Activated T-helper 1 cell treated with anti-CD3 and anti-CD28 coated beads, Interleukin-12 subunit alpha, Interleukin-12 subunit beta, Interleukin-2, Interleukin-4 antibody, amounts not matched to agents 30 ng/mL and 10 ng/mL and 1 ng/mL, durations not matched to agents 14 hours and 24 hours and 36 hours (primary cell): ENCODE measurements at regions of chr21 and their contacts with region 1.

Region 1: GRCh38 chr21:36104317-36105300 is 30.3 kb upstream of the CBR3 start:
- DNase-seq: peak; percentile 28
- H3K4me3 Mint-ChIP-seq: peak overlapping the region; percentile 50
- H3K27ac Mint-ChIP-seq: peak overlapping the region; percentile 36
- H3K4me1 Mint-ChIP-seq: peaks cover 15% of the 10 kb centered on the region
- H3K27me3 Mint-ChIP-seq: peaks cover 42% of the 10 kb centered on the region

Region 2: GRCh38 chr21:36060159-36060921 is 44.3 kb before region 1 on chr21 and contains the start of gene SETD4:
- intact Hi-C with region 1: loop called (anchors 1 kb)
- DNase-seq: peak; percentile 91
- H3K4me3 Mint-ChIP-seq: peak within 1 kb of the TSS; percentile 93
- H3K27ac Mint-ChIP-seq: peak within 1 kb of the TSS; percentile 98
- H3K4me1 Mint-ChIP-seq: peaks cover 23% of the 10 kb centered on the region
- H3K27me3 Mint-ChIP-seq: peaks cover 3% of the 10 kb centered on the region
- total RNA-seq, gene SETD4: 21.9 and 22.0 TPM in 2 replicates

Region 3: GRCh38 chr21:36069713-36070573 is 34.7 kb before region 1 on chr21 and contains the start of gene CBR1:
- intact Hi-C with region 1: loop called (anchors 1 kb)
- DNase-seq: peak; percentile 88
- H3K4me3 Mint-ChIP-seq: peak within 1 kb of the TSS; percentile 91
- H3K27ac Mint-ChIP-seq: peak within 1 kb of the TSS; percentile 85
- H3K4me1 Mint-ChIP-seq: peaks cover 46% of the 10 kb centered on the region
- H3K27me3 Mint-ChIP-seq: no peaks in the 10 kb centered on the region
- total RNA-seq, gene CBR1: 62.7 and 62.8 TPM in 2 replicates